Caki2 (cell line): ENCODE measurements at regions of chr17 and their contacts with region 1.

Region 1: DNA sequence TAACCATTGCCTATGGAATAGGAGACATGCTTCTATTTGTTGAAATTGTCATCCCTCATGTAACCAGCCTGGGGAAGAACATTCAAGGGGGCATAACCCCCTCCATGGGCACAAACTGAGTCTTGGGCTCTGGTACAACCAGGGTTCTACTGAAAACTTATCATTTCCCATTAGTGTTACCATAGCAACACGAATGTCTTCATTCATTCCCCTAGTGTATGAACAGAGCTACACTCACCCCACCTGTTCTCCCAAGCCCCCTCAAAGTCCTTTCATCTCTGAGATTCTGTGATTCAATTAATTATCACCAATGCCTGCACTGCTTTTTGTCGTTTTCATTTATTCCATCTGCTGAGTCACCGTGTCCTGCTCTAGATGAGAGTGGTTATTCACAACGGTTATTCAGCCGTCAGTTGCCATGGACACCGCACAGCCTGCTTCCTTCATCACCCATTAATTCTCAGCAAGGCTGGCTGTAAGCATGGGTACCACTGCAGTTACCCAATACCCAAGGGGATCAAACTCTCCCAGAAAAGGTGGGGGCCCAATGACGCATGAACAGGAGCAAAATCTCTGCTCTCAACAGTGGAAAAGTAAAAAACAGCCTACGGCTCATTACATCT is 1.6 kb upstream of the GAST start:
- DNase-seq: peak; percentile 83

Region 2: GRCh38 chr17:41811549-41812380 is 101.2 kb after region 1 on chr17 and contains the start of gene P3H4:
- in situ Hi-C with region 1: loop called (anchors 25 kb)
- DNase-seq: peak; percentile 91
- total RNA-seq, gene P3H4: 148 and 200 TPM in 2 replicates

Region 3: DNA sequence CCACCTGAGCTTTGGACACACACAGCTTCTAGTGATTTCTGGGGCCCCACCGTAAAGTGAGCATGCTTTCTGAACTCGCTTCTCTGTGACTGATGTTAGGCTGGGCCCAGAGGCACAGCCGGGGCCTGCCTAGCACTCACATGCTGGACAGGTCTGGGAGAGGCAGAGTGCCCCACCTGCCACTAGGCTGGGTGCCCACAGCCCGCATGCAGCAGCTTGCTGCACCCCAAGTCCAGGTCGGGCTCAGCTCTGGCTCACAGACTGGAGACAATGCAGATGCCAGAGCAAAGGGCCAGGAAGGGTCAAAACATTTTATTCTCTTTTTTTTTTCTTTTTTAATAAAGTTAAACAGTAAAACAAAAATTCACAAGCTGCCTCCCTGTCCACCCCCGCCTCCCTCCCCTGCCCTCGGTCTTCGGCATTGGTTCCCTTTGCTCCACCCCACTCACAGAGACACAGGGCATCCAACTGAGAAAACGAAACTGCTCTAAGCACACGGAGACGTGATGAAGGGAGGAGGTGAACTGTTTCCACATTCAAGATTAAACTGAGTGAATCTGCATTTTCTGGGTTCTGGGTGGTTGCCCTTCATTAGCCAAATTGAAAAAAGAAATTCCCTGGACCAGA is 265.7 kb after region 1 on chr17:
- in situ Hi-C with region 1: loop called (anchors 25 kb)
- DNase-seq: no peak